ENCODE measurements at regions of chr3 and their contacts with region 1.

Region 1: GRCh38 chr3:45537970-45538640 is 56.4 kb upstream of the LIMD1 start:
- DNase-seq: peak in 4 of 5 donors; percentile 58 to 77 (median 64)
- ATAC-seq: peak; percentile 66 to 85 (median 72)
- H3K4me3 ChIP-seq: peak overlapping the region in 1 of 12 donors; percentile 5
- H3K27ac ChIP-seq: peak overlapping the region; percentile 37 to 85 (median 78)
- H3K4me1 ChIP-seq: peaks cover 7 to 51% (median 27%) of the 10 kb centered on the region in 12 donors
- H3K27me3 ChIP-seq: no peaks in the 10 kb centered on the region
- CTCF ChIP-seq: no peak
- POLR2A ChIP-seq: no peak

Region 2: DNA sequence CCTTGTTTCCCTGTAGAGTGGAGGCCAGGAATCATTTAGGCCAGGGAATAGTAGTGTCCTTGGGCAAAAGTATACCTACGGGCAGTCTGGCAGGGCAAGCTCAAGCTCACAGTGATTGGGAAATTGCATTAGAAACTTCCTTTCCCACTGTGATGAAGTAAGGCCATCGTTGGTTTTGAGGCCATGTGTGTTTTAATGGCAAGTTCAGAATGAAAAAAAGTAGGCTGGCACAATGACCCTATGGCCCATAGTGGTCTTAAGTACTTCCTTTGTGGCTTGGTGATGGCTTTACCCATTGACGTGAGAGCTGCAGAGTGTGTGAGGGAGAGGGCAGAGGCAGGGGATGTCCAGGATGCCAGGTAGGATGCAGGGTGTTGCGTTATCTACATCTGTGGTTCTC is 85.3 kb after region 1 on chr3:
- intact Hi-C with region 1: no loop called
- DNase-seq: no peak
- ATAC-seq: no peak
- H3K4me3 ChIP-seq: no peak overlapping the region
- H3K27ac ChIP-seq: no peak overlapping the region
- H3K4me1 ChIP-seq: peaks cover 0 to 30% (median 5%) of the 10 kb centered on the region in 12 donors
- H3K27me3 ChIP-seq: no peaks in the 10 kb centered on the region
- CTCF ChIP-seq: no peak
- POLR2A ChIP-seq: no peak

Region 3: DNA sequence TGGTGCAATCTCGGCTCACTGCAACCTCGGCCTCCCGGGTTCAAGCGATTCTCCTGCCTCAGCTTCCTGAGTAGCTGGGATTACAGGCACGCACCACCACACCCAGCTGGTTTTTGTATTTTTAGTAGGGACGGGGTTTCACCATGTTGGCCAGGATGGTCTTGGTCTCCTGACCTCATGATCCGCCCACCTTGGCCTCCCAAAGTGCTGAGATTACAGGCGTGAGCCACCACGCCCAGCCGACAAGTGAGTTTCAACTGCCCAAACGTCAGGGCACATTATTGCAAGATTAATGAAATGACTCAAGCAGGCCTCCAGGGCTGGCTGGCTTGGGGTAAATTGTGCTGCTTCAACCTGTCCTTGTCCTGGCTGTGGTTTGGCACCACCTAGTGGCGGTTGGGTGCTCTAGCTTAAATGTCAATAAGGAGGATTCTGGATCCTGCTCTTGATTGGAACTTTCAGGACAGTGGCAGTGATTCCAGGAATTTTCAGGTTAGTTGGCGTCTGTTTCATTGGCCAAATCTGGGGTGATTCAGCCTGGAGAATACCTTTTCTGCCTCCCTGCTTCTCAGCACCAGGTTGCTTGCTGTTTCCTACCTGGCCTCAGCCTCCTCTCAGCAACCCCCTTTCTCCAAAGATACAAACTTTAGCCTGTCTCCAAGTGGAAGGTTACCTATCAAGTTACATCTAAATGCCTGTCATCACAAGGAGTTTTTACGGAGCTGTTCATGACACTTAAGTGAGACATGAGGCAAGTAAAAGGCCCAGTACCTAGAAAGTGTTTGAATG is 118.7 kb after region 1 on chr3:
- intact Hi-C with region 1: loop called in 1 of 10 experiments (anchors 2 kb)
- DNase-seq: peak; percentile 84 to 94 (median 93)
- ATAC-seq: peak; percentile 75 to 92 (median 88)
- H3K4me3 ChIP-seq: no peak overlapping the region
- H3K27ac ChIP-seq: peak overlapping the region in 2 of 12 donors; percentile 14 to 16
- H3K4me1 ChIP-seq: peaks cover 0 to 58% (median 41%) of the 10 kb centered on the region in 12 donors
- H3K27me3 ChIP-seq: no peaks in the 10 kb centered on the region
- CTCF ChIP-seq: peak; percentile 89 to 97 (median 93)
- POLR2A ChIP-seq: no peak

Region 4: DNA sequence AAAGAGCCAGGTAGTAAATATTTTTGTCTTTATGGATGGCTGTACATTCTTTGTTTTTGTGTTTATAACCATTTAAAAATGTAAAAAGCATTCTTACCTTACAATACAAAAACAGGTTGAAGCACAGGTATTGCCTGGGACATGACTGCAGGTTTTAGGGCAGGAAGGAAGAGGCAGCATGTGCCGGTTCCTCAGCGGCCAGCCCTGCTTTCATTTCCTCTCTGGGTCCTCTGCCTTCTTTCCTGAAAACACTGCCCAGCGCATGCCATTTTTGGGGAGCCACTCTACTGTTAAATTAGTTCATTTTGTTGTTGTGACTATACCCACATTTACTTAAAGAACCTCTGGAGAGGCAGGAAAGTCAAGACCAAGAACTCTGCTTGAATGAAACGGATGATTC is 203.6 kb after region 1 on chr3:
- intact Hi-C with region 1: no loop called
- DNase-seq: no peak
- ATAC-seq: no peak
- H3K4me3 ChIP-seq: no peak overlapping the region
- H3K27ac ChIP-seq: no peak overlapping the region
- H3K4me1 ChIP-seq: peaks cover 0 to 10% (median 0%) of the 10 kb centered on the region in 12 donors
- H3K27me3 ChIP-seq: no peaks in the 10 kb centered on the region
- CTCF ChIP-seq: no peak
- POLR2A ChIP-seq: no peak

Region 5: GRCh38 chr3:45861043-45861719 is 323.1 kb after region 1 on chr3:
- intact Hi-C with region 1: no loop called
- DNase-seq: no peak
- ATAC-seq: no peak
- H3K4me3 ChIP-seq: no peak overlapping the region
- H3K27ac ChIP-seq: no peak overlapping the region
- H3K4me1 ChIP-seq: no peaks in the 10 kb centered on the region
- H3K27me3 ChIP-seq: no peaks in the 10 kb centered on the region
- CTCF ChIP-seq: no peak
- POLR2A ChIP-seq: no peak